ENCODE measurements at regions of chr18 and their contacts with region 1.

Region 1: DNA sequence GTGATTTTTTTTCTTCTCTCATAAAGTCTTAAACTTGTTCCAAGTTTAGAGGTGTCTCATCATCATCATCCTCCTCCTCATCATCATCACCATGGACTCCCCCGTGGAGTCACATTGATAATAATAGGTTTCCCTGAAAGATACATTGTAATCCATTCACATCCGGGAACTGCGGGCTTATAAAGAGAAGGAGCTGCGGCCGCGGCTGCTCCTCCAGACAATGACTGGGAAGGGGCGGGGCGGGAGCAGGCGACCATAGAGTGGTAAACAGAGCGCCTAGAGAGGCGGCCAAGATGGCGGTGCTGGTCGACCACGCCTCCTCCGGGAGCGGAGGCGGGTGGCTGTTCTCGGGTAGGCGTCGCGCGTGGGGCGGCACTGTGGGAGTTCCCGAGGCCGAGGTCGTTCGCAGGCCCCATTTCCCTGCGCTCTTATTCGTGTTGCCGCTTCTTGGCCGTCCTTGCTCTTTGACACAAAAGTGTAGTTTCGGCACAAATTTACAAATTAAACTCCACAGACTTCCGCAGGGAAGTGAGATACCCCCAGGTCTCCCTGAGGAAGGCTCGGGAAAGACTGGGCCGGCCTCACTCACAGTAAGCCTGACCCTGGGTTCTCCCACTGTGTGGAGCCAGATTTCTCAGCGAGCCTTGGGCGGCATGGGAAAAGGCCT is 1.8 kb upstream of the TCF4 start:
- DNase-seq: peak; percentile 97
- H3K4me3 ChIP-seq: peak overlapping the region; percentile 64
- H3K27ac ChIP-seq: peak overlapping the region; percentile 77
- H3K4me1 ChIP-seq: peaks cover 19% of the 10 kb centered on the region
- H3K27me3 ChIP-seq: no peaks in the 10 kb centered on the region
- CTCF ChIP-seq: no peak

Region 2: DNA sequence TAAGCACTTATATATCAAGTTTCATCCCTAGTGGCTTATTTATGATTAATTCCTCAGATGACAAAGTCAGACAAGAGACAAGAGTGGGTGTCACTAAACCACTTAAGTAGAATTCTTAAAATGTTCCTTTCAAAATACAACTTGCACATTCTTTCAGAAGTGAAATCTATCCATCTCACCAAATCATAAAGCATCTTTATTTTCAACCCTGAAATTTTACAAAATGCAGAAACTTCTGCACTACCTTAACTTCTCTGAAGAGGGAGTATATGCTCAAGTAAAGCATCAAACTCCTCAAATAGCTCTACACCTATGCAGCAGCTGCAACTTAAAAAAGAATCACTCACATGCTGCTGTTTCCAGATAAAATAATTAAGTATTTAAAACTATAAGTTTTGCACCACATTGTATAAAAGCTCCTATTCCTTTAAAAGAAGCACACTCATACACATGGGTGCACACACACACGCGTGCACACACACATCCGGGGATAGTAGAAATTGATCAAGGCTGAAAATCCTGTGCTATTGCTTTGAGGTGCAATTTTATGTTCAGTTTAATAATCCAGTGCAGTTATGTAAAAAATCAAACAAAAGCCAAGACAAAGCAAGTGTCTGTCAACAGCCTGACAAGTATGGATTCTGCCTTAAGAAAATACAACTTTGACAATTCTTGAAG is 246.2 kb before region 1 on chr18:
- CTCF ChIA-PET with region 1: no interaction called
- POLR2A ChIA-PET with region 1: no interaction called
- intact Hi-C with region 1: loop called (anchors 5 kb)
- DNase-seq: peak; percentile 92
- H3K4me3 ChIP-seq: no peak overlapping the region
- H3K27ac ChIP-seq: peak overlapping the region; percentile 79
- H3K4me1 ChIP-seq: peaks cover 95% of the 10 kb centered on the region
- H3K27me3 ChIP-seq: no peaks in the 10 kb centered on the region
- CTCF ChIP-seq: peak; percentile 80

Region 3: DNA sequence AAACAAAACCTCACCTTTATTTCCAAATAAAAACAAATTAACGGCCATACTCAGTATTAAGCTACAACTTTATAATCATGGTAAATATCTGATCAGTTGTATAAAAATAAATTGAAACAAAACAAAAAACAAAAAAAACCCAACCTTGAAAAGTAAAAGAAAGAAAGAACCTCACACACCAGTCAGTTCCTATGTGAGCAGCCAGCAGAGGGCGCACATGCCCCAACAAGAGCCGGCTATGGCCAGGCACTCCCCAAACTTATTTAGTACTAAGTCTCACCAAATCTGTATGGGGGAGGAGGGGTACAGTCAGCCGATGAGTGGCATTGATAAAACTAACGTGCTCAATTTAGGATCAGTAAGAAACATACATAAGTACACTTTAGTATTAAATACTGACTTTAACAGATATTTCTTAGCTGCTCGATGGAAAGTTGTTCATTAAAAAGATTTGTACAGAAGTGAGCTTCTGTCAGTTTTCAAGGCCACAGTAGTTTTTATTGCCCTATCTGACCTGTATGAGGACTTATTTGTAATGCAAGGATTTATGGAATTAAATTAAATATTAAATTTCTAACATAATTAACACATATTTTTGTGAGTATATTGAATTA is 174.4 kb before region 1 on chr18:
- CTCF ChIA-PET with region 1: no interaction called
- POLR2A ChIA-PET with region 1: no interaction called
- intact Hi-C with region 1: loop called (anchors 2 kb)
- DNase-seq: peak; percentile 87
- H3K4me3 ChIP-seq: no peak overlapping the region
- H3K27ac ChIP-seq: no peak overlapping the region
- H3K4me1 ChIP-seq: peaks cover 72% of the 10 kb centered on the region
- H3K27me3 ChIP-seq: no peaks in the 10 kb centered on the region
- CTCF ChIP-seq: peak; percentile 99

Region 4: GRCh38 chr18:55422456-55423180 is 167.1 kb before region 1 on chr18:
- CTCF ChIA-PET with region 1: no interaction called
- POLR2A ChIA-PET with region 1: interaction called, 15 read pairs
- intact Hi-C with region 1: no loop called
- DNase-seq: peak; percentile 65
- H3K4me3 ChIP-seq: peak overlapping the region; percentile 47
- H3K27ac ChIP-seq: peak overlapping the region; percentile 78
- H3K4me1 ChIP-seq: peaks cover 63% of the 10 kb centered on the region
- H3K27me3 ChIP-seq: no peaks in the 10 kb centered on the region
- CTCF ChIP-seq: no peak

Region 5: DNA sequence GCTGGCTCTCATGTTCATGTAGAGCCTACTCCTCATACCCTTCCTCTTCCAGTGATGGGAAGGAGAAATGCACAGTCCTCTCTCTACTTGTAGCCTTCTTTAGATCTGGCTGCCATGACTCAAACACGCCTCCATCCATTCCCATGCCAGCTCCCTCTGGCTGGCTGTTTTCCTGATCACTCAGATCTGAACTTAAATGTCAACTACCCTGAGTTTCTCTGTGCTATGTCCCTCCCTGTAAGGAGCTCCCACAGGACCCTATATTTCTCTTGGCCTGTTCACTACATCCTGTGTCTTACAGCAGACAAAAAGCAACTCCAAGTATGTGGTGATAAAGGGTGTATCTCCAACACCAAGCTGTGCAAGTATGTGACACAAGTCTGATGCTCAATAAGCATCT is 154.2 kb before region 1 on chr18:
- CTCF ChIA-PET with region 1: no interaction called
- POLR2A ChIA-PET with region 1: no interaction called
- intact Hi-C with region 1: no loop called
- DNase-seq: no peak
- H3K4me3 ChIP-seq: no peak overlapping the region
- H3K27ac ChIP-seq: no peak overlapping the region
- H3K4me1 ChIP-seq: peaks cover 11% of the 10 kb centered on the region
- H3K27me3 ChIP-seq: no peaks in the 10 kb centered on the region
- CTCF ChIP-seq: no peak

Region 6: GRCh38 chr18:55509631-55510324 is 80.0 kb before region 1 on chr18:
- CTCF ChIA-PET with region 1: no interaction called
- POLR2A ChIA-PET with region 1: no interaction called
- intact Hi-C with region 1: loop called (anchors 5 kb)
- DNase-seq: peak; percentile 61
- H3K4me3 ChIP-seq: peak overlapping the region; percentile 18
- H3K27ac ChIP-seq: peak overlapping the region; percentile 82
- H3K4me1 ChIP-seq: peaks cover 66% of the 10 kb centered on the region
- H3K27me3 ChIP-seq: no peaks in the 10 kb centered on the region
- CTCF ChIP-seq: no peak

Region 7: DNA sequence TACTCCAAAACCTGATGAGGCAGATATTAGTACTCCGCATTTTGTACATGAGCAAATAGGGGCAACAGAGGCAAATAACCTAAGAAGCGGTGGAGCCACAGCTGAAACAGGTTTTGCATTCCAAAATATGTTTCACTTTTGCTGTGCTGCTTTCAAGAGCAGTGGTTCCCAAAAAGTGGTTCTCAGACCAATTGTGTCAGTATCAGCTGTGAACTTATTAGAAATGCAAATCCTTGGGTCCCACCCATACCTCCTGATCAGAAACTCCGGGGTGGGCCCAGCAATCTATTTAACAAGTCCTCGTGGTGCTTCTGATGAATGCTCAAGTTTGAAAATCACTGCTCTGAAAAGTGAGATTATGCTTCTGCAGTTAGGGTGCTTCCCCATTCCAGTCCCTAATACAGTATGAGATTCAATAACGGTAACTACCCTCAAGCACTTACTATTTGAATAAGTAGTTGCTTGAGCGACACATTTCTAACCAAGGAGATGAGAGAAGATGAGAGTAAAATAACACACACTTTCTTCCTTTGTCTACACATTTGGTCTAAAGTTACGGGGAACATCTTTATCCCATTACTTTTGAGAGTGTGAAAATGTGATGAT is 16.1 kb after region 1 on chr18:
- CTCF ChIA-PET with region 1: no interaction called
- POLR2A ChIA-PET with region 1: no interaction called
- intact Hi-C with region 1: no loop called
- DNase-seq: no peak
- H3K4me3 ChIP-seq: no peak overlapping the region
- H3K27ac ChIP-seq: no peak overlapping the region
- H3K4me1 ChIP-seq: no peaks in the 10 kb centered on the region
- H3K27me3 ChIP-seq: no peaks in the 10 kb centered on the region
- CTCF ChIP-seq: no peak

Region 8: DNA sequence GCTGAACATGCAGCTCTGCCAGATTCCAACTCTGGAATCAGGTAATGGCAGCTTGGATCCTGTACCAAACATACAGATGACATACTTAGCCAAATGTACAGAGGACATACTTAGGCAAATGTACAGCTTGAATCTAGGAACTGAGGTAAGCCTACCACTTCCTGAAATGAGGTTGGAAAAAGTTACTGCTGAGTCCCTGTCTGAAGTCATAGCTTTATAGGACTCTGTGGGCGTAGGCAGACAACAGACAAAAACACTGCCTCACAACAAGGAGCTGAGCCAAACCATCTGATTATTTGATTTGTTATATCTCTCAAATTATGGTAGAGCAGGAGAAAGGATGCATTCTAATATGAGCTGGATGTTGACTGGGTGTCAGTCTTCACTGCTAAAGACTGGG is 288.5 kb after region 1 on chr18:
- CTCF ChIA-PET with region 1: no interaction called
- POLR2A ChIA-PET with region 1: no interaction called
- intact Hi-C with region 1: no loop called
- DNase-seq: no peak
- H3K4me3 ChIP-seq: no peak overlapping the region
- H3K27ac ChIP-seq: no peak overlapping the region
- H3K4me1 ChIP-seq: no peaks in the 10 kb centered on the region
- H3K27me3 ChIP-seq: no peaks in the 10 kb centered on the region
- CTCF ChIP-seq: no peak